Heart left ventricle (tissue), 16 donors: ENCODE measurements at regions of chr2 and their contacts with region 1.

Region 1: DNA sequence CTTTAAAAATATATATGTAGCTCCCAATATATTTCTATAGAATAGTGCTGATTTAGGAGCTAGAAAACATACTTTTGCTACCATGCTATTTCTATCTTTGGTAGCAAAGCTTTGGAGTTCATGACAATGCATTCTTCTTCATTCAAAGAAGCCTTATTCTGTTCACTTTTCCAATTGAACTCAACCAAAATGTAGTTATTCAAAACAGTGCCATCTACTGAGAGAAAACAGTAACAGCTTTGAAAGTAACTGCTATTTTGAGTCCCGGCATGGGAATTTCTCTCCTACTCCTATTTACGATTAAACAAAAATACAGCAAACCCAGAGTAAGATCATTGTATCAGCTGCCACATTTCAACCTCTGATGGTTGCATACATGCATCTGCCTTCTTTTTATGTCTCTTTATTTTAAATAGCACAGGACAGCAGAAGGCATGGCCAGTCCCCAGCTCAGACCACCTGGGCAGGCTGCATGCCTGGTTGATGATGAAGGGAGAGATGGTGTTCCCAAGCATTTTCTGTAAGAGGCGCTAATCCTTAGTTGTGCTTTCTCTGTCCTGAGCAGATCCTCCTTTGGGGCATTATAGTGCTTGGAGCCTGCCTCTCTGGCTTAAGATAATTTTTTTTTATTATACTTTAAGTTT is 69.7 kb upstream of the SULT1C3 start:
- DNase-seq: no peak
- ATAC-seq: no peak
- H3K4me3 ChIP-seq: no peak overlapping the region
- H3K27ac ChIP-seq: no peak overlapping the region
- H3K4me1 ChIP-seq: no peaks in the 10 kb centered on the region
- H3K27me3 ChIP-seq: peaks cover 0 to 14% (median 0%) of the 10 kb centered on the region in 9 donors
- CTCF ChIP-seq: peak in 10 of 12 donors; percentile 22 to 58 (median 34)
- POLR2A ChIP-seq: no peak

Region 2: GRCh38 chr2:108082978-108083377 is 87.1 kb before region 1 on chr2:
- intact Hi-C with region 1: no loop called
- DNase-seq: no peak
- ATAC-seq: no peak
- H3K4me3 ChIP-seq: no peak overlapping the region
- H3K27ac ChIP-seq: no peak overlapping the region
- H3K4me1 ChIP-seq: no peaks in the 10 kb centered on the region
- H3K27me3 ChIP-seq: no peaks in the 10 kb centered on the region
- CTCF ChIP-seq: no peak
- POLR2A ChIP-seq: no peak

Region 3: DNA sequence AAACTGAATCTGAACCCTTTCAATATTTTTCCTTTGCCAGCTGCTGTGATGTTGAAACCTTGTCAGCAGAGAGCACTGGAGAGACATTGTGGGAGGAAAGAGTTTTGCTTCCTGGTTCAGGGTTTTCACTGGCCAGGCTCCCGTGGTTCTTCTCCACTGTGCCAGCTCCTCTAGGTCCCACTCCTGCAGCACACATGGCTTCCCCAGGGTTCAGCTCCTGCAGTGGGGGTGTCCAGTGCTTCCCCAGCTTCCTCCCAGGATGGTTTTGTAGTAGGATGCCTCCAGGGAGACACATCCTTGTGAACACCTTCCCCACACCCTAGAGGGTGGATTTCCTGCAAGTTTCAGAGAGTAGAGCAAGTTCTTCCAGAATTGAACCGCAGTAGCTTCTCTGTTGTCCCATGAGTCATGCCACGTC is 45.7 kb after region 1 on chr2:
- intact Hi-C with region 1: loop called in 1 of 10 experiments (anchors 2 kb)
- DNase-seq: no peak
- ATAC-seq: peak in 2 of 4 donors; percentile 33 to 44
- H3K4me3 ChIP-seq: no peak overlapping the region
- H3K27ac ChIP-seq: no peak overlapping the region
- H3K4me1 ChIP-seq: no peaks in the 10 kb centered on the region
- H3K27me3 ChIP-seq: no peaks in the 10 kb centered on the region
- CTCF ChIP-seq: peak in 10 of 12 donors; percentile 5 to 38 (median 22)
- POLR2A ChIP-seq: no peak